T-cell (primary cell): ENCODE measurements at regions of chr3 and their contacts with region 1.

Region 1: DNA sequence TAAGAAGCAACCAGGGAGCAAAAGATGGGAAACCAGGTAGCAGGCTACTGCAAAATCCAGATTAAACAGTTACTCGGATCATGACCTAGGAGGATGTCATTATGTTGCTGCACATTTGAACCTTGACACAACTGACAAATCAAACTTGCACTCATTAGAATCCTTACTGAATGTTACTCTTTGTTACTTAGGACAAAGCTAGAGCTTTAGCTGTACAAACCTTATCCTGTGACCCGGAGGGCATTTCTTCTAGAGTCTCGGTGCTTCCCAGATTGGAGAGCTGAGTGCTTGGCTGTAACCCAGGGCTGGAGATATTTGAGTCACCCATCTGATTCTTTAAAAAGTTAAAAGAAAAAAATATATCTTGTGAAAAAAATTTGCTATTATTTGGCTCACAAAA is 43.4 kb downstream of the DCP1A start:
- DNase-seq: no peak
- ATAC-seq: no peak
- H3K4me3 ChIP-seq: no peak overlapping the region
- H3K4me3 Mint-ChIP-seq: no peak overlapping the region
- H3K27ac ChIP-seq: no peak overlapping the region
- H3K27ac Mint-ChIP-seq: no peak overlapping the region
- H3K4me1 ChIP-seq: no peaks in the 10 kb centered on the region
- H3K4me1 Mint-ChIP-seq: peaks cover 0 to 4% (median 4%) of the 10 kb centered on the region in 3 donors
- H3K27me3 ChIP-seq: no peaks in the 10 kb centered on the region
- H3K27me3 Mint-ChIP-seq: no peaks in the 10 kb centered on the region

Region 2: GRCh38 chr3:53056442-53056841 is 247.5 kb before region 1 on chr3:
- CTCF ChIA-PET with region 1: no interaction called
- POLR2A ChIA-PET with region 1: no interaction called
- DNase-seq: no peak
- ATAC-seq: peak in 1 of 4 experiments; percentile 27
- H3K4me3 ChIP-seq: no peak overlapping the region
- H3K4me3 Mint-ChIP-seq: no peak overlapping the region
- H3K27ac ChIP-seq: no peak overlapping the region
- H3K27ac Mint-ChIP-seq: no peak overlapping the region
- H3K4me1 ChIP-seq: no peaks in the 10 kb centered on the region
- H3K4me1 Mint-ChIP-seq: no peaks in the 10 kb centered on the region
- H3K27me3 ChIP-seq: peaks cover 0 to 9% of the 10 kb centered on the region in 2 experiments
- H3K27me3 Mint-ChIP-seq: no peaks in the 10 kb centered on the region

Region 3: GRCh38 chr3:53269888-53270880 is 33.8 kb before region 1 on chr3:
- CTCF ChIA-PET with region 1: interaction called in 1 of 2 experiments, 10 read pairs
- POLR2A ChIA-PET with region 1: no interaction called
- DNase-seq: peak in 3 of 35 experiments; percentile 6 to 51 (median 10)
- ATAC-seq: peak in 2 of 4 experiments; percentile 26 to 28
- H3K4me3 ChIP-seq: no peak overlapping the region
- H3K4me3 Mint-ChIP-seq: no peak overlapping the region
- H3K27ac ChIP-seq: no peak overlapping the region
- H3K27ac Mint-ChIP-seq: no peak overlapping the region
- H3K4me1 ChIP-seq: peaks cover 3 to 7% of the 10 kb centered on the region in 2 experiments
- H3K4me1 Mint-ChIP-seq: peaks cover 4 to 8% (median 4%) of the 10 kb centered on the region in 3 donors
- H3K27me3 ChIP-seq: peaks cover 0 to 4% of the 10 kb centered on the region in 2 experiments
- H3K27me3 Mint-ChIP-seq: no peaks in the 10 kb centered on the region

Region 4: DNA sequence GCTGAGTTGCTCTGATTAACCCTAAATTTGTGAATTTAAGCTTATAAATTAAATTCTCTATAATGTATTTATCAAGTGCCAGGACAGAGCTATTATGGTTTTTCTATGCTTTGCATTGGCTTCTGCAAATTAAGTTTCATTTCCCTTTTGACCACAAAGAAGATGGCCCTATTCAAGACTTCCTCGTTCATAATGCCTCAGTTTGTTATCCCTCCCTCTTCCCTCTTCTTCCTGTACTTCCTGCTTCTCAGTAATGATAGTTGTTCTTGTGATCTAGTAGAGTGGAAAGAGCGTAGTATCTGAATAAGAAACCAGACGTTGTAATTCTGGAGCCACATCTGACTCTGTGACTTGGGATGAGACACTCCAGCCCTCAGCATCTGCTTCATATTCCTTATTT is 309.2 kb after region 1 on chr3:
- CTCF ChIA-PET with region 1: interaction called, 4 to 12 read pairs
- POLR2A ChIA-PET with region 1: no interaction called
- DNase-seq: no peak
- ATAC-seq: no peak
- H3K4me3 ChIP-seq: no peak overlapping the region
- H3K4me3 Mint-ChIP-seq: no peak overlapping the region
- H3K27ac ChIP-seq: no peak overlapping the region
- H3K27ac Mint-ChIP-seq: no peak overlapping the region
- H3K4me1 ChIP-seq: no peaks in the 10 kb centered on the region
- H3K4me1 Mint-ChIP-seq: no peaks in the 10 kb centered on the region
- H3K27me3 ChIP-seq: peaks cover 0 to 5% of the 10 kb centered on the region in 2 experiments
- H3K27me3 Mint-ChIP-seq: peaks cover 5 to 22% of the 10 kb centered on the region in 2 donors